Right ventricle myocardium inferior (tissue), 1 donor: ENCODE measurements at regions of chr4 and their contacts with region 1.

Region 1: GRCh38 chr4:146522098-146522868 is 543 bp upstream of the SLC10A7 start:
- DNase-seq: peak; percentile 95
- ATAC-seq: peak; percentile 98

Region 2: DNA sequence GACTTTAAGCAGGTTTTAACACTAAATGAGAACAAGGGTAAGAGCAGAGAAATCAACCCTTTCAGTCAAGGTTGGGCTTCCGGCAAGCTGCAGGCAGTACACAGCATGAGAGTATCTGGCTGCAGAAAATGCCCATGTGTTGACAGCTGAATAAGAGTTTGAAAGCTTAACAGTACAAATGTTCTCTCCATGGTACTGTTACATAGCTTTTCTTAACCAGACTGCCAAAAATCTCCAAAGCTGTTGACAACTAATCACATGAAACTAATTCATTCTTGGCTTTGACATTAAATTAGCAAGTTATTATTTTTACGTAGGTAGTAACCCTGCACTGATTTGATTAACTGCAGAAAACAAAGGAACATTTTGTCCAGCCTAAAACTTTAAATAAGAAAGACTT is 154.1 kb before region 1 on chr4:
- intact Hi-C with region 1: loop called (anchors 5 kb)
- DNase-seq: no peak
- ATAC-seq: peak; percentile 98

Region 3: DNA sequence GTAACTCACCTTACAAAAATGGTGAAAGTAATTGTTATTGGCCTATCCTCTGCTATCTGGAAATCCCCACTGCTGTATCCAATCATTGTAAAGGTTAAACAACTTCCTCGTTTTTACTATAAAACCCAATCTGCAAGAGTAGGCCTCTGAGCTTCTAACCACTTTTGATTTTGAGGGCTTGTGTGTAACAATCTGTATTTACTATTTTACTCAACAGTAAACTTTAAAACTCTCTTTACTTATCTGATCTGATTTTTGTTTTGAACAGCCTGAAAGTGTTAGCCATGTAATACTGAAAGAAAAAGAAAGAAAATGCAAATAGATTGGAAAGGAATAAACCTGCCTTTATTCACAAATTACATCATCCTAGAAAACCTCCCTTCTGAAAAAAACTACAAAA is 63.7 kb before region 1 on chr4:
- intact Hi-C with region 1: no loop called
- DNase-seq: no peak
- ATAC-seq: no peak

Region 4: GRCh38 chr4:146534178-146534577 is 11.9 kb after region 1 on chr4:
- intact Hi-C with region 1: no loop called
- DNase-seq: no peak
- ATAC-seq: no peak

Region 5: GRCh38 chr4:146592019-146592418 is 69.7 kb after region 1 on chr4:
- intact Hi-C with region 1: no loop called
- DNase-seq: no peak
- ATAC-seq: no peak

Region 6: DNA sequence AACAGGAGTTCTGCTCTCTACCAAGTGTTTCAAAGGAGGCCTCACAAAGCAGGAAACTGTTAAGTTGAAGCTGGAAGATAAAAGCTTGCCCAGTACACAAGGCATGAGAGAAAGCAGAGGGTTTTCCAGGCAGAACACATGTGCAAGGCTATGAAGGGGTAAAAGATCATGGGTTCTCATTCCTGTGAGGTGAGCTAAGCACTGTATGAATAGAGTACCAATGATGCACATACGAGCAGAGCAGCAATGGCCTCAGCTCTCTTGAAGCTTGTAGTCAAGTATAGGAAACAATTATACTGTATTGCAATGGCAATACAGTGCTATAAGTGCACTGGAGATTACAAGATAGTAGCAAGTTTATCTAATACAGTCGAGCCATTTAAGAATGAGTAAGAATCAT is 405.4 kb after region 1 on chr4:
- intact Hi-C with region 1: loop called (anchors 10 kb)
- DNase-seq: no peak
- ATAC-seq: no peak